ENCODE measurements at regions of chr5 and their contacts with region 1.

Region 1: GRCh38 chr5:146188358-146188757 is 5.9 kb upstream of the LARS1 start:
- DNase-seq: no peak
- H3K4me3 ChIP-seq: no peak overlapping the region
- H3K4me3 Mint-ChIP-seq: no peak overlapping the region
- H3K27ac Mint-ChIP-seq: no peak overlapping the region
- H3K4me1 ChIP-seq: no peaks in the 10 kb centered on the region
- H3K4me1 Mint-ChIP-seq: peaks cover 10% of the 10 kb centered on the region
- H3K27me3 ChIP-seq: no peaks in the 10 kb centered on the region
- H3K27me3 Mint-ChIP-seq: no peaks in the 10 kb centered on the region
- CTCF ChIP-seq: no peak

Region 2: GRCh38 chr5:145752947-145753346 is 435.4 kb before region 1 on chr5:
- CTCF ChIA-PET with region 1: no interaction called
- POLR2A ChIA-PET with region 1: interaction called, 11 read pairs
- intact Hi-C with region 1: no loop called
- DNase-seq: no peak
- H3K4me3 ChIP-seq: no peak overlapping the region
- H3K4me3 Mint-ChIP-seq: no peak overlapping the region
- H3K27ac Mint-ChIP-seq: no peak overlapping the region
- H3K4me1 ChIP-seq: no peaks in the 10 kb centered on the region
- H3K4me1 Mint-ChIP-seq: no peaks in the 10 kb centered on the region
- H3K27me3 ChIP-seq: no peaks in the 10 kb centered on the region
- H3K27me3 Mint-ChIP-seq: no peaks in the 10 kb centered on the region
- CTCF ChIP-seq: no peak

Region 3: GRCh38 chr5:146041180-146041789 is 147.1 kb before region 1 on chr5:
- CTCF ChIA-PET with region 1: no interaction called
- POLR2A ChIA-PET with region 1: no interaction called
- intact Hi-C with region 1: no loop called
- DNase-seq: peak in 1 of 2 experiments; percentile 31
- H3K4me3 ChIP-seq: no peak overlapping the region
- H3K4me3 Mint-ChIP-seq: no peak overlapping the region
- H3K27ac Mint-ChIP-seq: peak overlapping the region; percentile 73
- H3K4me1 ChIP-seq: peaks cover 38% of the 10 kb centered on the region
- H3K4me1 Mint-ChIP-seq: peaks cover 32% of the 10 kb centered on the region
- H3K27me3 ChIP-seq: no peaks in the 10 kb centered on the region
- H3K27me3 Mint-ChIP-seq: no peaks in the 10 kb centered on the region
- CTCF ChIP-seq: peak; percentile 20 to 50

Region 4: DNA sequence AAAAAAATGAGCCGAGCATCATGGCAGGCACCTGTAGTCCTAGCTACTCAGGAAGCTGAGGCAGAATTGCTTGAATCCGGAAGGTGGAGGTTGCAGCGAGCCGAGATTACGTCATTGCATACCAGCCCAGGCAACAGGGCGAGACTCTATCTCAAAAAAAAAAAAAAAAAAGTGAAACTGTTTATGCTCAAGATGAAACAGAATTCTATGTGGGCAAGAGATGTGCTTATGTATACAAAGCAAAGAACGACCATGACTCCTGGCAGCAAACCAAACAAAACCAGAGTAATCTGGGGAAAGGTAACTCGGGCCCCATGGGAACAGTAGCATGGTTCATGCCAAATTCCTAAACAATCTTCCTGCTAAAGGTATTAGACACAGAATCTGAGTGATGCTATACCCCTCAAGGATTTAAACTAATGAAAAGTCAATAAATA is 50.4 kb before region 1 on chr5:
- CTCF ChIA-PET with region 1: no interaction called
- POLR2A ChIA-PET with region 1: no interaction called
- intact Hi-C with region 1: loop called (anchors 2 kb)
- DNase-seq: peak; percentile 68 to 71
- H3K4me3 ChIP-seq: no peak overlapping the region
- H3K4me3 Mint-ChIP-seq: no peak overlapping the region
- H3K27ac Mint-ChIP-seq: peak overlapping the region; percentile 70
- H3K4me1 ChIP-seq: peaks cover 9% of the 10 kb centered on the region
- H3K4me1 Mint-ChIP-seq: peaks cover 5% of the 10 kb centered on the region
- H3K27me3 ChIP-seq: no peaks in the 10 kb centered on the region
- H3K27me3 Mint-ChIP-seq: no peaks in the 10 kb centered on the region
- CTCF ChIP-seq: no peak

Region 5: DNA sequence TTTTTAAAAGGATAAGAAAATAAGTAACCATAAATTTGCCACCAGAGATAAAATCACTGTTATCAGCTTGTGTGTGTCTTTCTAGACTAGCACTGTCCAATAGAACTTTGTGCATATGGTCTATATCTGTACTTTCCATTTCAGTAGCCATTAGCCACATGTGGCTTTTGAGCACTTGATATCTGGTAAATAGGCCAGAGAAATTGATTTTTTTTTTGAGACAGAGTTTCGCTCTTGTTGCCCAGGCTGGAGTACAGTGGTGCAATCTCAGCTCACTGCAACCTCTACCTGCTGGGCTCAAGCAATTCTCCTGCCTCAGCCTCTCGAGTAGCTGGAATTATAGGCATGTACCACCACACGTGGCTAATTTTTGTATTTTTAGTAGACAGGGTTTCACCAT is 32.9 kb after region 1 on chr5:
- CTCF ChIA-PET with region 1: no interaction called
- POLR2A ChIA-PET with region 1: no interaction called
- intact Hi-C with region 1: no loop called
- DNase-seq: no peak
- H3K4me3 ChIP-seq: no peak overlapping the region
- H3K4me3 Mint-ChIP-seq: no peak overlapping the region
- H3K27ac Mint-ChIP-seq: no peak overlapping the region
- H3K4me1 ChIP-seq: no peaks in the 10 kb centered on the region
- H3K4me1 Mint-ChIP-seq: no peaks in the 10 kb centered on the region
- H3K27me3 ChIP-seq: no peaks in the 10 kb centered on the region
- H3K27me3 Mint-ChIP-seq: no peaks in the 10 kb centered on the region
- CTCF ChIP-seq: no peak